K562 (cell line): ENCODE measurements at regions of chr5 and their contacts with region 1.

Region 1: GRCh38 chr5:139262742-139263445 is 30.6 kb upstream of the MATR3 start:
- DNase-seq: peak; percentile 72 to 87 (median 78)
- ATAC-seq: peak; percentile 98
- H3K4me3 ChIP-seq: no peak overlapping the region
- H3K27ac ChIP-seq: peak overlapping the region; percentile 34; the same call in 2 of the 3 replicates
- H3K4me1 ChIP-seq: peaks cover 0 to 12% of the 10 kb centered on the region in 2 experiments; a peak in 4 of 5 replicates
- H3K27me3 ChIP-seq: no peaks in the 10 kb centered on the region
- CTCF ChIP-seq: peak; percentile 87 to 93 (median 88)
- EP300 ChIP-seq: peak; percentile 7; the same call in 1 of the 2 replicates
- POLR2A ChIP-seq: no peak
- RAD21 ChIP-seq: peak; percentile 95

Region 2: GRCh38 chr5:138583984-138584637 is 678.8 kb before region 1 on chr5:
- CTCF ChIA-PET with region 1: interaction called, 4 read pairs
- POLR2A ChIA-PET with region 1: no interaction called
- in situ Hi-C with region 1: loop called (anchors 10 kb)
- intact Hi-C with region 1: loop called (anchors 5 kb)
- DNase-seq: no peak
- ATAC-seq: no peak
- H3K4me3 ChIP-seq: no peak overlapping the region
- H3K27ac ChIP-seq: no peak overlapping the region
- H3K4me1 ChIP-seq: no peaks in the 10 kb centered on the region; a peak in 1 of 5 replicates
- H3K27me3 ChIP-seq: peaks cover 0 to 7% of the 10 kb centered on the region in 2 experiments; a peak in 1 of 5 replicates
- CTCF ChIP-seq: no peak
- EP300 ChIP-seq: no peak
- POLR2A ChIP-seq: no peak
- RAD21 ChIP-seq: no peak

Region 3: DNA sequence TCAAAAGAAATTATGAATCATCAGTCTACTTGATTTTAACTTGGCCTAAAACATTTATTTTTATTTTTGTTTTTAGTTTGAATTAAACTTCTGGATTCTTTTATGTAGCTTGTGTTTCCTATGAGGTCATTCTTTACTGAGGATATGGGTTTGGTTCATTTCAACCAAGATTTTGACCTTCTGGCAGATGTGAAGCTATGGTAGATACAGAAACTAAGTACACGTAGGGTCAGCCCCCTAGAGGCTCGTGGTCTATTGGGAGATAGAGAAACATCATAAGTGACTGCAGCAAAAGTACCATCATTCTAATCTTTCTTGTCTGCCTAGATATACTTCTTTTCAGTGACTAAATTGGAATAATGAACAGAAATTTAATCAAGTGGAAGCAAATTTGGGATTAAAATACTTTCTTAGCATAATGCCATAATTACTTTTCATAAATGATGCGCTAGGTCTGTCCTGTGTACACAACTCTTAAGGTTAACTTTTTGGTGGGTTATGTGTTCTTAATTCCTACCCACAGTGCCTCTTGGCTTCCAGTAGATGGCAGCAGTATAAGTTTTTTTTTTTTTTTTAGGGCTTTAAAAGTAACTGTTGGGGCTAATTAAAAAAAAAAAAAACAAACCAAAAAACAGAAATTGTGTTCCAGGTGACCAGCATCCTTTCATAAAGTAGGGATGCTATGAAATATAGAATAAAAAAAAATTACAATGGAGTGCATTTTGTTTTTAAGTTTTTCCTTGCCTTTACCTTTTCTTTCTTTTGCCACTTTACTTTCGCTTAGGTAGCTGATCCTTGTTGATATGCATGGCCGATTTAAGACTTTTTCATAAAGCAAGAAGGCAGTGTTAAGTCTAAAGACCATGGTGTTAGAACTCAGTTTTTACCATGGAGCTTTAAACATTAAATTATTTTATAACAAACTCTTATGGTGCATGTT is 437.7 kb before region 1 on chr5:
- CTCF ChIA-PET with region 1: interaction called, 5 read pairs
- POLR2A ChIA-PET with region 1: no interaction called
- in situ Hi-C with region 1: no loop called
- intact Hi-C with region 1: loop called (anchors 5 kb)
- DNase-seq: peak; percentile 8 to 42 (median 35)
- ATAC-seq: peak; percentile 85
- H3K4me3 ChIP-seq: no peak overlapping the region
- H3K27ac ChIP-seq: no peak overlapping the region
- H3K4me1 ChIP-seq: no peaks in the 10 kb centered on the region
- H3K27me3 ChIP-seq: no peaks in the 10 kb centered on the region
- CTCF ChIP-seq: peak; percentile 30 to 56 (median 53); a peak in 5 of 6 replicates
- EP300 ChIP-seq: no peak
- POLR2A ChIP-seq: no peak
- RAD21 ChIP-seq: no peak

Region 4: GRCh38 chr5:139091439-139092156 is 171.3 kb before region 1 on chr5:
- CTCF ChIA-PET with region 1: interaction called, 5 read pairs
- POLR2A ChIA-PET with region 1: no interaction called
- in situ Hi-C with region 1: no loop called
- intact Hi-C with region 1: loop called (anchors 2 kb)
- DNase-seq: peak in 1 of 4 experiments; percentile 28
- ATAC-seq: peak; percentile 75
- H3K4me3 ChIP-seq: no peak overlapping the region
- H3K27ac ChIP-seq: no peak overlapping the region
- H3K4me1 ChIP-seq: no peaks in the 10 kb centered on the region
- H3K27me3 ChIP-seq: no peaks in the 10 kb centered on the region
- CTCF ChIP-seq: peak; percentile 23 to 46 (median 26); a peak in 3 of 6 replicates
- EP300 ChIP-seq: no peak
- POLR2A ChIP-seq: no peak
- RAD21 ChIP-seq: peak; percentile 26 to 49; a peak in 2 of 4 replicates